ENCODE measurements at regions of chr19 and their contacts with region 1.

Region 1: DNA sequence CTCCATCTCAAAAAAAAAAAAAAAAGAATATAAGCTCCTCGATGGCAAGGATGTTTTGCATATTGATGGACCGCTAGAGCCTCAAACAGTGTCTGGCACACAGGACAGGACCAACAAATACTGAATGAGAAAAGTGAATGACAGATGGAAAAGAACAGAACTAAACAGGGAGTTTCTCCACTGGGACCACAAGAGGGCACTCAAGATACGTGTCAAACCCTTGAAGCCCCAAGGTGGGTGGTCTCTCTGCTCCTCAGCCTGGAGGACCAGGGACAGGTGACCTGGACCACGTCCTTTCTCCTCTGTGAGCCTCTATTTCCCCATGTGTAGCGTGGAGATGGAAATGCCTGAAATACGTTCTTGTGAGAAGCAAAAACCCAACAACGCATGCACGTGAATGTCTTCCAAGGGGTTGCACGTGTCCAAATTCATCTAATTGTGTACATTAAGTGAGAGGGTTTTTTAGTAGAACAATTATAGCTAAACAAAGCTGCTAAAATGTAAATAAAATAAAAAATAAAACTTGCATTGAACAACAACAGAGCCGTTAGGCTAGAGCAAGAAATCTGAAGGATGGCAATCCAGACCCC is 5.7 kb upstream of the CDC42EP5 start:
- DNase-seq: no peak
- ATAC-seq: no peak

Region 2: GRCh38 chr19:54395685-54396084 is 83.1 kb before region 1 on chr19:
- intact Hi-C with region 1: no loop called
- DNase-seq: no peak
- ATAC-seq: no peak

Region 3: GRCh38 chr19:54407780-54408179 is 71.0 kb before region 1 on chr19:
- intact Hi-C with region 1: no loop called
- DNase-seq: no peak
- ATAC-seq: no peak

Region 4: DNA sequence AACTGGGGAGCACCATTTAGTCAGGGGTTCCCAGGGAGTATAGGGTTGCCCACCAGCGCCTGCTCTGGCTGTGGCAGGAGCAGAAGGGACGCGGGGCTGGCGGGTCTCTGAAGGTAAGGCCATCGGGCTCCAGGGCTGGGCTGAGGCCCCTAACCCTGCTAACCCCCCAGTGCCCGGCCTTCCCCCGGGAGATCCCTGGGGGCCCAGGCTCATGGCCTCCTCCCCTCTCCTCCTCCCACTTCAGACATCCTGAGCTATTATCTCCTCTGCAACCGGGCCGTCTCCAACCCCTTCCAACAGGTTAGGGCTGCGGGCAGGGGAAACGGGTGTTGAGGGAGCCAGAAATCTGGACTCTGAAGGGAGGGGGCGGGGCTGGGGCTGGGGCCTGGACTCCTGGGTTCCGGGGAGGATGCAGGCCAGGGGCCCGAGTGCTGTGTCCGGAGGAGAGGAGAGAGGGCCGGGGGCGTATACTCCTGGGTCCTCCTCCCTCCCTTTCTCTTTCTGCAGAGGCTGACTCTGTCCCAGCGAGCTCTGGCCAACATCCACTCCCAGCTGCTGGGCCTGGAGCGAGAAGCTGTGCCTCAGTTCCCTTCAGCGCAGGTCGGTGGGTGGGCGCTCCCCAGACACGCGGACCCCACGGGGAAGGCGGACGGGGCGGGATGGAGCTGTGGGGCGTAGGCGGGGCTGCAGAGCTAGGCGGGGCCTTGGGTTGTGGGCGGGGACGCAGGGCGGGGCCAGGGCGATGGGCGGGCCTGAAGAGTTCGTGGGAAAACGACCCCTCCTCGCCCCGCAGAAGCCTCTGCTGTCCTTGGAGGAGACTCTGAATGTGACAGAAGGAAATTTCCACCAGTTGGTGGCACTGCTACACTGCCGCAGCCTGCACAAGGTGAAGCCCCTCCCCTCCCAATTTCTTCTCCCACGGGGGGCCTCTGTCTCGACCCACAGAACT is 48.2 kb before region 1 on chr19:
- intact Hi-C with region 1: loop called (anchors 5 kb)
- DNase-seq: no peak
- ATAC-seq: peak; percentile 64

Region 5: GRCh38 chr19:54674021-54674617 is 195.3 kb after region 1 on chr19:
- intact Hi-C with region 1: loop called (anchors 10 kb)
- DNase-seq: no peak
- ATAC-seq: no peak